ENCODE measurements at regions of chr2 and their contacts with region 1.

Region 1: GRCh38 chr2:170815746-170816503 is 762 bp upstream of the GAD1 start:
- DNase-seq: peak in 1 of 2 experiments; percentile 92
- H3K4me3 ChIP-seq: peak overlapping the region; percentile 39 to 70 (median 52); a peak in 7 of 8 replicates
- H3K27ac ChIP-seq: no peak overlapping the region
- H3K4me1 ChIP-seq: peaks cover 3 to 52% (median 24%) of the 10 kb centered on the region in 4 experiments
- H3K27me3 ChIP-seq: peaks cover 61 to 82% (median 79%) of the 10 kb centered on the region in 4 experiments
- CTCF ChIP-seq: peak in 2 of 3 experiments; percentile 74 to 99; a peak in 3 of 4 replicates
- EP300 ChIP-seq: no peak
- POLR2A ChIP-seq: no peak
- RAD21 ChIP-seq: peak; percentile 93 to 96

Region 2: DNA sequence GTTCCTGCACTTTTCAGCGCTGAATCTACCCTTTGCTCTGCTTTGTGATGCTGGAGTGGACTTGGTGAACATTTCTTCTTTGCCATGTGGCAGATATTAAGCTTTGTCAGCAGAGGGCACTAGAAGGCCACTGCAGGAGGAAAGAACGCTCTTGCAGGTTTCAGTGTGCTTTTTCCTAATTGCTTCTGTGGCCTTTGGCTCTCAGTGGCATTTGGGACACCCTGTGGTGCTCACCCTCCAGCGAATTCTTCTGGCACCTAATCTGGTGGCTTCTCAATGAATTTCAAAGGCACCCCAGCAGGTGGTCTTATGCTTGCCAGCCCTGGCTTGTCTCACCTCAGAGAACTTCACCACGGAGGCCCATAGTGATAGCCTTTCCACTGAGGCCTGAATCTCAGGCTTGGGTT is 491.3 kb before region 1 on chr2:
- CTCF ChIA-PET with region 1: interaction called, 36 read pairs
- POLR2A ChIA-PET with region 1: interaction called, 3 read pairs
- DNase-seq: peak; percentile 67 to 75
- H3K4me3 ChIP-seq: no peak overlapping the region
- H3K27ac ChIP-seq: no peak overlapping the region
- H3K4me1 ChIP-seq: no peaks in the 10 kb centered on the region
- H3K27me3 ChIP-seq: no peaks in the 10 kb centered on the region
- CTCF ChIP-seq: peak; percentile 19 to 95 (median 95)
- EP300 ChIP-seq: peak in 1 of 2 experiments; percentile 28; a peak in 1 of 3 replicates
- POLR2A ChIP-seq: no peak
- RAD21 ChIP-seq: peak; percentile 99

Region 3: DNA sequence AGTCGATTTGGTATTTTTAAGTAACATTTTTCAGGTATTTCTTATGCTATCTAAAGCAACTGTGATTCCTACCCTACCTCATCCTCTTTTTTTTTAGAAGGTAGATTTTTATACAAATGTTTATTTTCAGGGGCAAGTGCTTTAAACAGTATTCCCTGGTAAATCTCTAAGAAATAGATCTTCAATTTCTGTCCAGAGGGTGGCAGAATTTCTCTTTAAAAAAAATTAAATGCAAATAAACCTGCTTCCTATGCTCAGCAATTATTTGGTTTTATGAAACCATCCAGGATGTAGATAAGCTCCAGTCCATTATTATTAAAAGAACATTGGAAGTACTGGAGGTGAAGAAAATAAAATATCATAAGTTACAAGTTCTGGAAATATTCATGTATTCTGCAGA is 446.0 kb before region 1 on chr2:
- CTCF ChIA-PET with region 1: interaction called, 68 read pairs
- POLR2A ChIA-PET with region 1: no interaction called
- DNase-seq: no peak
- H3K4me3 ChIP-seq: peak overlapping the region in 1 of 4 experiments; percentile 27; a peak in 1 of 8 replicates
- H3K27ac ChIP-seq: no peak overlapping the region
- H3K4me1 ChIP-seq: peaks cover 0 to 16% (median 10%) of the 10 kb centered on the region in 4 experiments; a peak in 4 of 7 replicates
- H3K27me3 ChIP-seq: no peaks in the 10 kb centered on the region
- CTCF ChIP-seq: no peak
- EP300 ChIP-seq: no peak
- POLR2A ChIP-seq: no peak
- RAD21 ChIP-seq: no peak; a peak in 1 of 4 replicates

Region 4: DNA sequence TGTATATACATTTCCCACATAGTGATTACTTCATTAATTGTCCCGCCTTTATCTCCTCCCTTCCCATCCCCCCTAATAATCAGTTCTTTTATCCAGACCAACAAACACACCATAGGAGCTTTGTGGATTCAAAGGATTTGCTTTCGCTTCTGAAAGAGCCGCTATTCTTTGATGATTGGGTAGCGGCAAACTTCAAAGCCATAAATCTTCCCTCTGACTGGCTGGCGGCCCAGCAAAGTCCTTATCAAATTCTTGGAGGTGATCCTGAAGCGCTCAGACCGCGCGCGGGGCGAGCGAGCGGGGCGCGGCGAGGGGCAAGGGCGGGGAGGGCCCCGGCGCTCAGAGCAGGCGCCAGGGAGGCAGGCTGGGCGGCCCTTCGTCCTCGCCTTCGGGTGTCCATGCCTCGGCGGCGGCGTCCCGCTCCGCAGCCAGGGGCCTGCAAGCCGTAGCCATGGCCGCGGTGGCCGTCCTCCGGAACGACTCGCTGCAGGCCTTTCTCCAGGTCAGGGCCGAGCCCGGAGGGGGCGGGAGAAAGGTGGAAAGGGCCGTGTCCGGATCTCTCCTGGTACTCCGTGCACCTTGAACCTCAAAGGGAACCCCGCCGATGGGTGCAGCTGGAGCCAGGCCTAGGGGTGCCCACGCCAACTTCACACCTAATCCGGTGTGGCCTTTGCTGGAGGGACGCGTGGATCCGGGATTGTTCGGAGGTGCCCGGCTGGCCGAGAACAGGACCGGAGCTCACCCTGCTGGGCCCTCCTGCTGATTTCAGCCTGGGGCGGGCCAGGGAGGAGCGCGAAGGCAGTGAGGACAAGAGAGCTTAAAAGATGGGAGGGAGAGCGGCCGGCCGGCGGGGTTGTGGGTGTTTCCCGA is 100.6 kb before region 1 on chr2 and contains the start of gene SP5:
- CTCF ChIA-PET with region 1: interaction called, 20 read pairs
- POLR2A ChIA-PET with region 1: interaction called, 13 read pairs
- DNase-seq: peak; percentile 46 to 83
- H3K4me3 ChIP-seq: peak within 1 kb of the TSS; percentile 12 to 55 (median 28)
- H3K27ac ChIP-seq: no peak within 1 kb of the TSS
- H3K4me1 ChIP-seq: peaks cover 5 to 50% (median 26%) of the 10 kb centered on the region in 4 experiments
- H3K27me3 ChIP-seq: peaks cover 66 to 98% (median 93%) of the 10 kb centered on the region in 4 experiments
- CTCF ChIP-seq: no peak
- EP300 ChIP-seq: no peak
- POLR2A ChIP-seq: no peak
- RAD21 ChIP-seq: no peak
- total RNA-seq, gene SP5: 0.31 TPM in 1 of 2 replicates, not detected in the other

Region 5: GRCh38 chr2:170763232-170763631 is 52.7 kb before region 1 on chr2:
- CTCF ChIA-PET with region 1: interaction called, 10 read pairs
- POLR2A ChIA-PET with region 1: no interaction called
- DNase-seq: no peak
- H3K4me3 ChIP-seq: no peak overlapping the region
- H3K27ac ChIP-seq: no peak overlapping the region
- H3K4me1 ChIP-seq: peaks cover 0 to 6% (median 2%) of the 10 kb centered on the region in 4 experiments; a peak in 3 of 7 replicates
- H3K27me3 ChIP-seq: no peaks in the 10 kb centered on the region
- CTCF ChIP-seq: no peak
- EP300 ChIP-seq: no peak
- POLR2A ChIP-seq: no peak
- RAD21 ChIP-seq: no peak

Region 6: DNA sequence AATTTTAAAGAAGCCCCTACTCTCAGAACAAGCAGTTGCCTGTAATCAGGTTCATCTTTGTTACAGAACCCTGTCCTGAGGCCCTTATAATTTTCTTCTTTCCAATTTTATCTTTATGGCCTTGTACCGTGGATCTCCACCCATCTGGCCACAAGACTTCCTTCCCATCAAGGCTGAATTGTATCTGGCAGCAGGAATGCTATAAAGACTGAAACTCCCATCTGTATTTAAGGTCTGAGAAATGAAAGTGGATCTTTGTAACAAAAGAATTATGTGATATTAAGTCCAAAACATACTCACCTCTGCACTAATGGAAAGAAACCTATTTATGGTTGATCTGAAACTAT is 526.1 kb after region 1 on chr2:
- CTCF ChIA-PET with region 1: no interaction called
- POLR2A ChIA-PET with region 1: no interaction called
- DNase-seq: no peak
- H3K4me3 ChIP-seq: no peak overlapping the region
- H3K27ac ChIP-seq: no peak overlapping the region
- H3K4me1 ChIP-seq: no peaks in the 10 kb centered on the region
- H3K27me3 ChIP-seq: no peaks in the 10 kb centered on the region
- CTCF ChIP-seq: no peak
- EP300 ChIP-seq: no peak
- POLR2A ChIP-seq: no peak
- RAD21 ChIP-seq: no peak

Measured in H1 (cell line).